AG04450 (cell line): ENCODE measurements at regions of chr2 and their contacts with region 1.

Region 1: GRCh38 chr2:62410015-62410453 is 96.0 kb downstream of the TMEM17 start:
- DNase-seq: no peak
- H3K4me3 ChIP-seq: no peak overlapping the region
- H3K27ac ChIP-seq: no peak overlapping the region
- H3K27me3 ChIP-seq: peaks cover 10% of the 10 kb centered on the region
- CTCF ChIP-seq: no peak

Region 2: DNA sequence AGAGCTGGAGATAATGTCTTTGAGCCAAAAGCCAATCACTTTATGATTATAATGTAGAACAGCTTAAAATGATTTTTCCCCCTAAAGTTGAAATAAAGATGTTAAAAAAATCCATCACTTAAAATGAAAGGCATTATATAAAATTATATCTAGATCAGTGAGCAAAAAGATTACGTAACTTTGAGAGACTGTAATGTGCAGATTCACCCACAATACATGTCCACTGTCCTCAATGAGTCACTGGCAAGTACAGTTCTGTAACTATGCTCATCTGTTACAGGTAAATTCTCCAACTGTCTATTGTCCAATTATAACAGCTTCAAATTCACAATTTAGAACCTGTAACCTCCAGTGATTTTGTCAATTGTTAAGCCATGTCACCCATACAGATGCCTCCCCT is 575.1 kb before region 1 on chr2:
- CTCF ChIA-PET with region 1: no interaction called
- POLR2A ChIA-PET with region 1: no interaction called
- DNase-seq: no peak
- H3K4me3 ChIP-seq: no peak overlapping the region
- H3K27ac ChIP-seq: no peak overlapping the region
- H3K27me3 ChIP-seq: no peaks in the 10 kb centered on the region
- CTCF ChIP-seq: no peak

Region 3: GRCh38 chr2:61920548-61920947 is 489.5 kb before region 1 on chr2:
- CTCF ChIA-PET with region 1: interaction called, 22 read pairs
- POLR2A ChIA-PET with region 1: no interaction called
- DNase-seq: no peak
- H3K4me3 ChIP-seq: no peak overlapping the region
- H3K27ac ChIP-seq: no peak overlapping the region
- H3K27me3 ChIP-seq: no peaks in the 10 kb centered on the region
- CTCF ChIP-seq: no peak

Region 4: GRCh38 chr2:61993444-61994024 is 416.5 kb before region 1 on chr2:
- CTCF ChIA-PET with region 1: interaction called, 32 read pairs
- POLR2A ChIA-PET with region 1: no interaction called
- DNase-seq: peak; percentile 11
- H3K4me3 ChIP-seq: no peak overlapping the region
- H3K27ac ChIP-seq: no peak overlapping the region
- H3K27me3 ChIP-seq: no peaks in the 10 kb centered on the region
- CTCF ChIP-seq: peak; percentile 80

Region 5: DNA sequence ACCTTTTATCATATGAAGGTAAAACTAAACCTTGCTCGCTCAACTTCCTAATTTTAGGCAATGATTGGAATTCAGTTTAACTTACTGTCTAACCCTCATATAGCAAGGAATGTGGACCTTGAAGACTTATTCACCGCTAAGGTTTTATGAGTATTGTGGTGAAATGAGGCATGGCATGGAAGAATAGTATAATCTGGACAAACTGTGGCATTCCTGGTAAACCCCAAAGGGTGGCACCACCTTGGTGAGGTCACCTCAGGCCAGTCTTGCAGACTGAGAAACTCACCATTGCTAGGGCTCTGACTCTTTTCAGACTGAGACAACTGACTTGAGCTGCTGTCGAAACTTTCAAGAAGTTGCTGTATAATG is 244.4 kb after region 1 on chr2:
- CTCF ChIA-PET with region 1: no interaction called
- POLR2A ChIA-PET with region 1: no interaction called
- DNase-seq: no peak
- H3K4me3 ChIP-seq: no peak overlapping the region
- H3K27ac ChIP-seq: no peak overlapping the region
- H3K27me3 ChIP-seq: no peaks in the 10 kb centered on the region
- CTCF ChIP-seq: no peak